ENCODE measurements at regions of chr1 and their contacts with region 1.

Region 1: DNA sequence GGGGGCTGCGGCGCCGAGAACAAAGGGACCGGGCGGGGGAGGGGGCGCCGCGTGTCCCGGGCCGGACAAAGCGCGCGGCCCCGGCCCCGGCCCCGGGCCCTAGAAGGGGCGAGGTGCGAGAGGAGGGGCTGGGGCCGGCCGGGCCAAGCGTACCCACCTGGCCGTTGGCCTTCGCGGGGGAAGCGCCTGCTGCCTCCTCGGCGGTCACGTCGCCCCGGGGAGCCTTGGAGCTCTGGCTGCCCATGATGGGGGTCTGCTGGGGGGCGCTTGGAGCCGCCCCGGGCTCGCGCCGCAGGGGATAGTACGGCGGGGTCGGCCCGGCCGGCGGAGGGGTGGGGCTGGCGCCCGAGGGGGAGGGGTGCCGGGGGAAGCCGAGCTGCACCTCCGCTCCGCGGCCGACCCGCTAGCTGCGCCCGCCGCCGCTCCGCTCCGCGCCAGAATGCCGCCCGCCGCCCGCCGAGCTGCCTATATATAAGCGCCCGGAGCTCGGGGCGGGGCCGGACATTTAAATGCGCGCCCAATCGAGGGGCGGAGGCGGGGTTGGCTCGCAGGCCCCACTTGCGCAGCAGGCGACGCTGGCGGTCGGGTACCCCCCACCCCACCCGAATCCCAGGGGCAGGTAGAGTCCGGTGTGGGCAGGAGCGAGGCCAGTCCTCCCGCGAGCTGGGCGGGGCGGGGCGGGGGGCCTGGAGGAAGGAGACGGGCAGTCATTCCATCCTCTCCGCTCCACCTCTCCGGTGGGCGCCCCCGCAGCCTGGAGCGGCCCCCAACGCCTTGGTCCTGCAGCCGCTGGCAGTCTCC is at the start of gene MARCKSL1:
- DNase-seq: peak; percentile 81
- H3K4me3 Mint-ChIP-seq: peak within 1 kb of the TSS; percentile 77
- H3K27ac Mint-ChIP-seq: peak within 1 kb of the TSS; percentile 43
- H3K4me1 Mint-ChIP-seq: peaks cover 48% of the 10 kb centered on the region
- H3K27me3 Mint-ChIP-seq: no peaks in the 10 kb centered on the region
- total RNA-seq, gene MARCKSL1: 13.1 to 14.6 TPM

Region 2: DNA sequence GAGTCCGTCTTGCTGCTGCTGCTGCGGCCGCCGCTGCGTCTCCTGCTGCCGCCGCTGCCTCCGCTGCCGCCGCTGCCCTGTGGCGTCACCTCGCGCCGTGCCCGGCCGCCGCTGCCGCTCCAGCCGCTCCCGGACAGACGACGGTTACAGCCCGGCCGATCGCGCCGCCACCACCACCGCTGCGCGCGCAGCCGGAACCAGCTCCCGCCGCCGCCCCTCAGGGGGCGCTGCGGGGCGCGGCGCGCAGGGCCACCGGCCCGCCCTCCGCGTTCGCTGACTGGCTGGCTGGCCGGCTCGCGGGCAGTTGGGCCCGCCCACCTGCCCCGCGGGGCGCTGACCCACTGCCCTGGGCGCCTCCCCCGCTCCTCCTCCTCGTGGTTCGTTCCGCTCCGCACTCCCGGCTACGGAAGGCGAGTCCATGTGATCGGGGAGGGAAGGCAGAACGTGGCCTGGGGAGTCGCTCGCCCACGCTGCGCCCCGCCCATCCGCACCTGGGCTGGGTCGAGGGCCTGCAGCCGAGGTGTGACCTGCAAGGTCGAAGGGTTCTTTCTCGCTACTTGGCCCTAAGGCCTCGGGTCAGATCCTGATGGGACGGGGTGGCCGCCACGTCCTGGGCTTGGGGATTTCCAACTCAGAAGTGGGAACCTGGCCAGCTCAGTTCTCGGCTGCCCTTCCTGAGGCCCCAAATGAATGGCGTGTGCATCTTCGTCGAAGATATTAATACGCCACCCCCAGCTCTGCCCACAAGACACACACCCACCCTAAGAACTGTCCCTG is 397.6 kb before region 1 on chr1 and contains the start of gene PTP4A2:
- CTCF ChIA-PET with region 1: no interaction called
- POLR2A ChIA-PET with region 1: no interaction called
- intact Hi-C with region 1: loop called (anchors 5 kb)
- DNase-seq: peak; percentile 94
- H3K4me3 Mint-ChIP-seq: peak within 1 kb of the TSS; percentile 98
- H3K27ac Mint-ChIP-seq: peak within 1 kb of the TSS; percentile 96
- H3K4me1 Mint-ChIP-seq: peaks cover 66% of the 10 kb centered on the region
- H3K27me3 Mint-ChIP-seq: no peaks in the 10 kb centered on the region
- total RNA-seq, gene PTP4A2: 275 to 285 TPM

Region 3: DNA sequence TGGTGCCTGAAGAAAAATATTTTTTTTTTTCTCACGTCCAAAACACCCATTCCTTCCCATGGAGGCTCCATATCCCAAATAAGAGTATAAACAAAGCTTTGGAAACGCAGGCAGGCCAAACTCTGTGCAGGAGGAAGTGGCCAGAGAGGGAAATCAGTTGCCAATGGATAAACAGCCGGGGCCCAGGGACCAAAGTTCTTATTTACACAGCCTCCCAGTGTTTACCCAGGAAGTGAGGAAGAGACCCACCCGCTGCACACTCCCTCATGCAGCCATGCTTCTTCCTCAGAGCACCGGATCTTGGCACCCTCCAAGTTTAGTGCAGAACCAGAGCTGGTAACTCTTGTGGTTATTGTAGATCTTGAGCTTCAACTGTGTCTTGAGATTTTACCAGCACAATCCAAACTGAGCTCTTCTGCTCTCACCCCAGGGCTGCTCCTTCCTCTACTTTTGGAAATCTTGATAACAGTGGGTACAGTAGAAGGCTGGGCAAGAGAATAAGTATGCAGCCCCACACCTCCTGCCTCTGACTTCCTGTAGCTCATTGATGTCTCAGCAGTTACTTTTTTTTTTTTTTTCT is 14.2 kb before region 1 on chr1:
- CTCF ChIA-PET with region 1: interaction called, 9 read pairs
- POLR2A ChIA-PET with region 1: interaction called, 12 read pairs
- intact Hi-C with region 1: no loop called
- DNase-seq: peak; percentile 41
- H3K4me3 Mint-ChIP-seq: peak overlapping the region; percentile 22
- H3K27ac Mint-ChIP-seq: peak overlapping the region; percentile 93
- H3K4me1 Mint-ChIP-seq: peaks cover 38% of the 10 kb centered on the region
- H3K27me3 Mint-ChIP-seq: no peaks in the 10 kb centered on the region

Region 4: DNA sequence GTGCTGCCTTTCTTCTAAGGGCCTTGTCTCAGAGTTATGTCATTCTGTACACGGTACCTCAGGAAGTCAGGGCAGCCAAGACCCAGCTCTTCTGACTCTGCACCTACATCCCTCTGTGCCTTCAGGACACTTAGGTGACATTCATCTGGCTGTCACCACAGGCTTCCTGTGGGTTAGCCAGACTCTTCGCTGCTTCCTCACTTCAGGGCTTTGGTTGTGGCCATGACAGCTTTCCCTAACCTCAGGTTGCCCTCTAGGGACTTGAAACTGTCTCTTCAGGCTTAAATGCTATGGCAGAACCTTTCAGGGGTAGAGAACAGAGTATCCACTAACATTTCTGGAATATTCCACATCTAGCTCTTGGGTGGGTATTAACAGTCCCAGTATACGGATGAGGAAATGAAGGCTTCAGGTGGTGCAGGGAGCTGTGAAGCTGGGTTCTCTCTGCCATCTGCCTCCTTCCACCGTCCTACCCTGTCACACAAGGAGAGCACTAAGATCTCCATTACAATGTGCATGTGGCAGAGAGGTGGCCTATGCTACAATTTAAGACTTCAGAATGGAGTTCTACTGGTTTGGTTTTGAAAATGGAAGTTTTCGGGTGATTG is 36.3 kb after region 1 on chr1:
- CTCF ChIA-PET with region 1: interaction called, 14 read pairs
- POLR2A ChIA-PET with region 1: no interaction called
- intact Hi-C with region 1: loop called (anchors 2 kb)
- DNase-seq: peak; percentile 63
- H3K4me3 Mint-ChIP-seq: no peak overlapping the region
- H3K27ac Mint-ChIP-seq: no peak overlapping the region
- H3K4me1 Mint-ChIP-seq: peaks cover 14% of the 10 kb centered on the region
- H3K27me3 Mint-ChIP-seq: no peaks in the 10 kb centered on the region

Region 5: DNA sequence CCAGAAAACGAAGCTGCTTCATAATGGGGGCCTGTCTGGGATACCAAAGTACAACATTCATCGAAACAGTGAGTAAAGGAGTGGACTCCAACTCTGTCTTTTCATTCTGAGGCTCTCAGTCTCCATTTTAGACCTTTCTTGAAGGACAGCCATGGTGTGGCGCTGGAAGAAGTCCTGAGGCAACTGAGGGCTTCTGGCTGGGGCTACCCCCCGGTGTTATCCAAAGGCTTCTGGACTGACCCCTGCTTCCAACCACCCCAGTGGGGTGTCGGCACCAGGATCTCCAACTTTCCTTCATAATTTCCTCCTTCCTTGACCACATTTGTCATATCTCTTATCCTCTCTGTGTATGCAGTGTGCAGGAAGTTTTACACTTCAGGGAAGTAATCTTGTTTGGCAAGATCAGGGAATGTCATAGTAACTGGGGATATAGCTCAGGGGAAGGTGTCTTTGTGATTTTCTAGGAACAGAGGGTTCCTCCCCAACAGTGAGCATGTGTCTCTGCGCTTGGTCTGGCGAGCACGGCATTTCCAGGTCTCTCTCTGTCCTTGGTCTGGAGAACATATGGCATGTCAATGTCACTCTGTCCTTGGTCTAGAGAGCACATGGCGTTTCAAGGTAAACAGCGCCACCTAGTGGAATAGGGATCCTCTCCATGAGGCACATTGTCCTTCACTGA is 77.7 kb after region 1 on chr1:
- CTCF ChIA-PET with region 1: interaction called, 4 read pairs
- POLR2A ChIA-PET with region 1: no interaction called
- intact Hi-C with region 1: loop called (anchors 5 kb)
- DNase-seq: peak; percentile 78
- H3K4me3 Mint-ChIP-seq: no peak overlapping the region
- H3K27ac Mint-ChIP-seq: peak overlapping the region; percentile 38
- H3K4me1 Mint-ChIP-seq: peaks cover 4% of the 10 kb centered on the region
- H3K27me3 Mint-ChIP-seq: peaks cover 5% of the 10 kb centered on the region

Region 6: DNA sequence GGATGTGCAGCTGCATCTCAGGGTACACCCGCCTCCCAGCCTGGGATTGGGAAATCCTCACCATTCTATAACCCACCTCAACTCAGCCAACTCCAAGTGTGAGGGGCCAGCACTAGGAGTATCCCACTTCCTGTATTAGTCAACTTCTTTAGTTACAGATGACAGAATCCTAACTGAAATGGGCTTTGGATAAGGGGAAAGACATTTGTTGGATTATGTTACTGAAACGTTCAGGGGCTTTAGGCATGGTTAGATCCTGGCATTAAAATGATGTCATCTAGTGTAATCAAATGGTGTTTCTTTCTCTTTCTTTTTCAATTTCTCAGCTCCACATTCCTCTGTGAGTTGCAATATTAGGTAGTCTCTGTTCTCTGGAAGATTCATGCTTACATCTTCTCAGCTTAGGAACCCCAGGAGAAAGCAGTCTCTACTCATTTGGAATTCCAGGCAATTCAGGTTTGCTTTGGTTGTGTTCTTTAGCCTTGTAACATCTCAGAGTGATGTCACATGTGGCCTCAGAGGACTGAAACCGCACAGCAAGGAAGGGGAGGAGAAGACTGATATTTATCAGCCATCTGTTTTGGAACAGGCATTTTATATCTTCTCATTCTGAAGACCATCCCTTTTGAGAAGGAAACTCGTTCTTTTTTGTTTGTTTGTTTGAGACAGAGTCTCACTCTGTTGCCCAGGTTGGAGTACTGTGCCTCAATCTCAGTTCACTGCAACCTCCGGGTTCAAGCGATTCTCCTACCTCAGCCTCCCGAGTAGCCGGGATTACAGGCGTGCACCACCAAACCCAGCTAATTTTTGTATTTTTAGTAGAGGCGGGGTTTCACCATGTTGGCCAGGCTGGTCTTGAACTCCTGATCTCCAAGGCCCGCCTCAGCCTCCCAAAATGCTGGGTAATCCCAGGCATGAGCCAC is 584.1 kb after region 1 on chr1:
- CTCF ChIA-PET with region 1: no interaction called
- POLR2A ChIA-PET with region 1: no interaction called
- intact Hi-C with region 1: no loop called
- DNase-seq: no peak
- H3K4me3 Mint-ChIP-seq: no peak overlapping the region
- H3K27ac Mint-ChIP-seq: no peak overlapping the region
- H3K4me1 Mint-ChIP-seq: peaks cover 12% of the 10 kb centered on the region
- H3K27me3 Mint-ChIP-seq: peaks cover 48% of the 10 kb centered on the region

Measured in activated CD4-positive, alpha-beta memory T cell treated with anti-CD3 and anti-CD28 coated beads for 36 hours (primary cell).